ENCODE measurements at regions of chr1 and their contacts with region 1.

Region 1: GRCh38 chr1:161726596-161727457 is 5.5 kb downstream of the FCRLB start:
- DNase-seq: peak; percentile 83
- ATAC-seq: peak; percentile 74
- H3K4me3 Mint-ChIP-seq: peak overlapping the region; percentile 98
- H3K27ac Mint-ChIP-seq: peak overlapping the region; percentile 93
- H3K4me1 Mint-ChIP-seq: peaks cover 43% of the 10 kb centered on the region
- H3K27me3 Mint-ChIP-seq: peaks cover 27% of the 10 kb centered on the region

Region 2: DNA sequence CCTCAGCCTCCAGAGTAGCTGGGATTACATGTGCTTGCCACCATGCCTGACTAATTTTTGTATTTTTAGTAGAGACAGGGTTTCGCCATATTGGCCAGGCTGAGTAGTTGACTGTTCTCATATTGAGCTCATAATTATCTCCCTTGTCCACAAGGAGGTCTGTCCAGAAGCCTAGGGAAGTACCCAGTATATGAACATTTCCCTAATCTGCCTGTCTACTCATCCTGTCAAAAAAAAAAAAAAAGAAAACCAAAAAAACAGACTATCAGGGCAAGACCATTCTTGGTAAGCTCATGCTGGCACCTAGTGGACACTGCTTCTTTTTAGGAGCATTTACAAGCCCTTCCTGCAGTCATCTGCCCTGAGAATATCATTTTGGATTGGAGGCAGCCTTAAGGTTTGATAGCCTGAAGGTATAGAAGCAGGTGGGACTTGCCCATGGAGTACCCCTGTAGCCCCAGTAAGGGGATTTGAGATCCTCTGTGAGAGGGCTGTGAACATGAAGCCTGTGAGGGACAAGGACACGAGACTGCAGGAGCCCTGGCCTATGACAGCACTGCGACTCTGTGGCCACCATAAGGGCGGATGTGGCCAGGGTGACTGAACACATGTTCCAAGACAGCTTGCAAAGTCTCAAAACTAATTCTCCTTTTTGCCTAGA is 11.9 kb after region 1 on chr1:
- POLR2A ChIA-PET with region 1: interaction called, 55 read pairs
- DNase-seq: peak; percentile 72
- ATAC-seq: peak; percentile 88
- H3K4me3 Mint-ChIP-seq: peak overlapping the region; percentile 54
- H3K27ac Mint-ChIP-seq: peak overlapping the region; percentile 78
- H3K4me1 Mint-ChIP-seq: peaks cover 42% of the 10 kb centered on the region
- H3K27me3 Mint-ChIP-seq: no peaks in the 10 kb centered on the region

Region 3: DNA sequence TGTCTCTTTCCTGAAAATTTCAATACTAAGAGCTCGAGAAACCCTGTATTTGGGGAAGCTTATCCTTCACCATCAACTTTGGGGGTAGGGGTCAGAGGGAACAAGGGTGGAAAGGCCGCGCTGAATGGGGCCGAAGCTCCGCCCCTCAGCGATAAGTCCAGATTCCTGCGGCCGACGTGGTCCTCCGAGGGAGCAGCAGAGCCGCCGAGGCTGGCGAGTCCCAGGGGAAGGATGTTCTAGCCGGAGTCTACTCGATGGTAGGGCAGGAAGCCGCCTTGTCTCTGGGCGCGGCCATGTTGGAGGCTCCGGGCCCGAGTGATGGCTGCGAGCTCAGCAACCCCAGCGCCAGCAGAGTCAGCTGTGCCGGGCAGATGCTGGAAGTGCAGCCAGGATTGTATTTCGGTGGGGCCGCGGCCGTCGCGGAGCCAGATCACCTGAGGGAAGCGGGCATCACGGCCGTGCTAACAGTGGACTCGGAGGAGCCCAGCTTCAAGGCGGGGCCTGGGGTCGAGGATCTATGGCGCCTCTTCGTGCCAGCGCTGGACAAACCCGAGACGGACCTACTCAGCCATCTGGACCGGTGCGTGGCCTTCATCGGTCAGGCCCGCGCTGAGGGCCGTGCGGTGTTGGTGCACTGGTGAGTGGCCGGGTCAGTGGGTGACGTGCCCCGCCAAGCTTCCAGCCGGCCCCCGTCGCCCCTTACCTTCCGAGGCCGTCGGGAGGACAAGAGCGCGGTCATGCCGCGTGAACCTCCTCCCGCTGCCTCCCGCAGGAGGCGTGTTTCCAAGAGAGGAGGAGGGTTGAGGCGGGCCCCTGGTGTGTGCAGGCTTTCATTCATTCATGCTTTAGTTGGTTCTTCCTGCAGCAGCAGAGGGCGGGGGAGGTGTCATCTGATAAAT is 22.9 kb after region 1 on chr1 and contains the start of gene DUSP12:
- POLR2A ChIA-PET with region 1: interaction called, 16 read pairs
- DNase-seq: peak; percentile 84
- ATAC-seq: peak; percentile 95
- H3K4me3 Mint-ChIP-seq: peak within 1 kb of the TSS; percentile 98
- H3K27ac Mint-ChIP-seq: peak within 1 kb of the TSS; percentile 96
- H3K4me1 Mint-ChIP-seq: peaks cover 32% of the 10 kb centered on the region
- H3K27me3 Mint-ChIP-seq: peaks cover 2% of the 10 kb centered on the region
- total RNA-seq, gene DUSP12: 28.7 to 32.2 TPM

Region 4: DNA sequence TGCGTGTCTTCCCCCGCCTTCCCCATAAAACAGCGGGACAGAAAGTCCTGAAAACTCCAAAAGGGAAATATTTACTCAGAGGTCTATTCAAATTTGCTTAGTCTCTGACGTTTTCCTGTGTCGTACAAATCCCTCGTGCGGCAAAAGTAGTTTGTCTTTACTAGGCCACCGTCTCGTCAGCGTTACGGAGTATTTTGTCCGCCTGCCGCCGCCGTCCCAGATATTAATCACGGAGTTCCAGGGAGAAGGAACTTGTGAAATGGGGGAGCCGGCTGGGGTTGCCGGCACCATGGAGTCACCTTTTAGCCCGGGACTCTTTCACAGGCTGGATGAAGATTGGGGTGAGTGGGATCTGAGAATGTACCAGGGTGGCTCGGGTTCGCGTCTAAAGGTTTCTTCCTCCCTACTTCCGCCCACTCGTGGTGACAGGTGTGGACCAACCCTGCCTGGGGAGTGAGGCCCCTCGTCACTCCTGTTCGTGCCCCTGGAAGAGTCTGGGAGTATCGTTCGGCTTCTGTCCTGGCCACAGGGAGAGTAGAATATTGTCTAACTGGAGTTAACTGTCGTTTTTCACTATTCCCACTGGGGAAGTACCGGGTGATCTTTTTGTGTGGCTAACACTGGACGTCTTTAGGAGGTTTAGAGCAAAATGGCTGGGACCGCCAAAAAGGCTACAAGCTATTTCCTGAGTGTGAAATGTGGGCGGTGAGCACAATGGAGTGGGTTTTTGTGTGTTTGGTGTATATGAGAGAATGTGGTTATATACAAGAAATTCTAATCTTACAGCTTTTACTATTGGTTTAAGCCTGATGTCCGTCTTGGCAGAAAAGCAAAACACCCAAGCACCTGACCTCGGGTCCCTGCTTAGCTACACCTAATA is 39.5 kb after region 1 on chr1 and contains the start of gene ATF6:
- POLR2A ChIA-PET with region 1: no interaction called
- DNase-seq: peak; percentile 80
- ATAC-seq: peak; percentile 75
- H3K4me3 Mint-ChIP-seq: peak within 1 kb of the TSS; percentile 99
- H3K27ac Mint-ChIP-seq: peak within 1 kb of the TSS; percentile 98
- H3K4me1 Mint-ChIP-seq: peaks cover 40% of the 10 kb centered on the region
- H3K27me3 Mint-ChIP-seq: no peaks in the 10 kb centered on the region
- total RNA-seq, gene ATF6: 18.5 to 20.0 TPM

Measured in activated naive CD8-positive, alpha-beta T cell treated with anti-CD3 and anti-CD28 coated beads, Interleukin-2, amount 10 ng/mL, durations not matched to agents 7 days and 5 days (primary cell).